ENCODE measurements at regions of chr10 and their contacts with region 1.

Region 1: DNA sequence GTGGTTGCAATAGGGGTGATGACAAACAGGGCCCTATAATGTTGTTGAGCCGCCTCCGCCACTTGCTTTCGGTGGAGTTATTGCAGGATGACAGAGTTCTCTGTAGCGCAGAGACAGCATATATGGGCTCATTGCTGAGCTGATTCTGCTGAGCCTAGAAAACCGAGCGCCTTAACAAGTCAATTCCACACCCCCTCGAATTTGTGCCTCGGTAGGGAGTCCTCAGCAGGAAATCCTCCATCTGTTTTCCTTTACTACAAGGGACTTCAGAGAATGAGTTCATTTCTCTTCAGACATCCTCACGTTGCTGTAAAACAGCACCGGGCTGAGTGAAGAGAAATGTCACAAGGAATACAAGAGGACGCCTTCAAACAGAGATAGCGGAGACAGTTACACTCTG is 90.7 kb upstream of the KIAA1217 start:
- DNase-seq: no peak
- ATAC-seq: no peak
- H3K4me3 ChIP-seq: peak overlapping the region; percentile 14 to 45 (median 36)
- H3K27ac ChIP-seq: peak overlapping the region; percentile 90 to 96 (median 92)
- H3K4me1 ChIP-seq: peaks cover 30 to 42% of the 10 kb centered on the region in 2 donors
- H3K27me3 ChIP-seq: no peaks in the 10 kb centered on the region
- CTCF ChIP-seq: no peak
- POLR2A ChIP-seq: peak; percentile 20 to 38

Region 2: DNA sequence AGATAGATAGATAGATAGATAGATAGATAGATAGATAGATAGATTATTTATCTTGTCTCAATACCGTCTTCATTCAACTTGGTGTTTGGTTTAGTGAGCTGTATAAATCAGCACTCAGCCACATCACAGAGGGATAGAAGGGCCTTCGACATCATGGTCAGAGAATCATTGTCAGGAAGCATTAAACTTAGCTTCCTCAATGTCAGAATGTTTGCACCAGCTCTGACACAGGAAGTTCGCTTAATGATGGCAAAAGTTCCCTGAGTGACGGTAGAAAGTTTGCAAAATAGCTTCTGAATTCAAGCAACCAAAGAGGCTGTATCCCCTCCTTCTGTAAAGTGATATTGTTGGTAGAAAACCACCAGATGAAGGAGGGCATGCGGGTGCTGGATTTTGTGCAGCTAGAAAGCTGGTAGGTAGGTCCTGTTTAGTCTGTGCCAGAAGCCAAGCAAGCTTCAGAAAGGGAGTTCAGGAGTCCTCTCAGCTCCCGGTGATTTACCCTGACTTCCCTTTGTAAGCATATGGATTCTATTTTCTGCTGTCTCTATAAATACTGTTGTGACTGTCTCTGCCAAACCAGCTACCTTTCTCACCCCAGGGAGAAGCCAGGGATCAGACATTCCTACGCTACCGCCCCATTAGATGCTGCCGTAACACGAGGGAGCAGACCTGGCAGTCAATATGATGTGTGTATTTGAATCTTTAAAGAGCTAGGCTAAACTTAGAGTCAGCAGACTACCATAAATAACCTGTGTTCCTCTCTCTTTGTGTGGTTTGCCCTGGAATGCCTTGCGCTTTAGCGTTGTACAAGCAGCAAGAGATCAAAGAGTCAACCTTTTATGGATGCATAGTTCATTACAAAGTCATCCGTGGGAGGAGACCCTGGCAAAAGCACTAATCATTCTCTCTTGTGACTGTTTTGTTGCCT is 109.8 kb before region 1 on chr10:
- in situ Hi-C with region 1: no loop called
- intact Hi-C with region 1: loop called (anchors 5 kb)
- DNase-seq: peak in 1 of 2 donors; percentile 52
- ATAC-seq: peak; percentile 84 to 96
- H3K4me3 ChIP-seq: peak overlapping the region in 3 of 4 donors; percentile 1 to 32 (median 25)
- H3K27ac ChIP-seq: peak overlapping the region; percentile 62 to 83 (median 74)
- H3K4me1 ChIP-seq: peaks cover 16 to 19% of the 10 kb centered on the region in 2 donors
- H3K27me3 ChIP-seq: no peaks in the 10 kb centered on the region
- CTCF ChIP-seq: no peak
- POLR2A ChIP-seq: no peak

Region 3: GRCh38 chr10:24039897-24040296 is 78.3 kb before region 1 on chr10:
- in situ Hi-C with region 1: no loop called
- intact Hi-C with region 1: loop called (anchors 2 kb)
- DNase-seq: peak; percentile 46 to 60
- ATAC-seq: peak; percentile 90 to 93
- H3K4me3 ChIP-seq: no peak overlapping the region
- H3K27ac ChIP-seq: peak overlapping the region; percentile 35 to 67 (median 63)
- H3K4me1 ChIP-seq: peaks cover 20 to 34% of the 10 kb centered on the region in 2 donors
- H3K27me3 ChIP-seq: no peaks in the 10 kb centered on the region
- CTCF ChIP-seq: no peak
- POLR2A ChIP-seq: no peak

Measured in gastrocnemius medialis (tissue), 4 donors.